GM10248 (cell line): ENCODE measurements at regions of chr19 and their contacts with region 1.

Region 1: DNA sequence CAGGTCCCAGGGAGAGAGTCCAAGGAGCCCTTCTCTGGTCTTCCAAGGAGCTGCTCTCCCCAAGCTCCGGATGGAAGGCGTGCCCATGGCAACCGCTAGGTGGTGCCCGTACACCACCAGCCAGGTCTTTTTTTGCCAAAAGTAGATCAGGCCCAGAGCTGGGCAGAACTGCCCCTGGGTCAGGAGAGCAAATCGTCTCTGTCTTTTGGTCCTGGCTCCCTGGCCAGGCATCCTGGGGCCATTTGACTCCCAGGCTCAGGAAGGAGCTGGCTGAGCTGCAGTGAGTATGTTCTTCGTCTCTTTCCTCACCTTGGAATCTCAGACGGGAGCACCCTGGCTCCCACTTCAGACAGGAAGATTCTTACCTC is 24.6 kb upstream of the BCL3 start:
- DNase-seq: peak; percentile 85
- CTCF ChIP-seq: peak; percentile 96

Region 2: GRCh38 chr19:44653977-44654774 is 69.8 kb before region 1 on chr19:
- CTCF ChIA-PET with region 1: interaction called, 27 read pairs
- POLR2A ChIA-PET with region 1: no interaction called
- DNase-seq: peak; percentile 87
- CTCF ChIP-seq: peak; percentile 92

Region 3: GRCh38 chr19:44689056-44689895 is 34.7 kb before region 1 on chr19:
- CTCF ChIA-PET with region 1: interaction called, 126 read pairs
- POLR2A ChIA-PET with region 1: no interaction called
- DNase-seq: peak; percentile 73
- CTCF ChIP-seq: peak; percentile 90

Region 4: DNA sequence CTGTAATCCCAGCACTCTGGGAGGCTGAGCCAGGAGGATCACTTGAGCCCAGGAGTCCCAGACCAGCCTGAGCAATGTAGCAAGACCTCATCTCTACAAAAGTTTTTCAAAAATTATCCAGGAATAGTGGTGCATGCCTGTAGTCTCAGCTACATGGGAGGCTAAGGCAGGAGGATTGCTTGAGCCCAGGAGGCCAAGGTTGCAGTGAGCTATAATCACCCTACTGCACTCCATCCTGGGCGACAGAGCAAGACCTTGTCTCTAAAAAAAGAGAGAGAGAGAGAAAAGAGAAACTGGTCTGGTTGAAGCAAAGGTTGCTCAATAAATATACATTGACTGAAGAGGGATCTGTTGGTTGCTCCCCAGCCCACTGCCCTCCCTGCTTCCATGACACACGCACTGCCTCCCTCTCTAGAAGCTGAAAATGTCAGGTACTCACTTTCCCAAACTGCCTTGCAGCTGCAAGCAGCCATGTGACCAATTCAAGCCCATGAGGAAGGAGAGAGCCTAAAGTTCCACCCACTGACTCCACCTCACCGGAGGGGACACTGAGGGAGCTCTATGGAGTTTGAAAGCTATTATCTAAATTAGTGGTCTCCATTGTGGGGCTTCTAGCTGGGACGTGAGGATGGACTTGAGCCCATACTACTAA is 10.9 kb before region 1 on chr19:
- CTCF ChIA-PET with region 1: interaction called, 49 read pairs
- POLR2A ChIA-PET with region 1: no interaction called
- DNase-seq: no peak
- CTCF ChIP-seq: no peak

Region 5: GRCh38 chr19:44752816-44753618 is 29.1 kb after region 1 on chr19:
- CTCF ChIA-PET with region 1: interaction called, 57 read pairs
- POLR2A ChIA-PET with region 1: interaction called, 4 read pairs
- DNase-seq: peak; percentile 94
- CTCF ChIP-seq: no peak

Region 6: GRCh38 chr19:44782729-44783128 is 58.8 kb after region 1 on chr19:
- CTCF ChIA-PET with region 1: interaction called, 513 read pairs
- POLR2A ChIA-PET with region 1: no interaction called
- DNase-seq: no peak
- CTCF ChIP-seq: no peak

Region 7: DNA sequence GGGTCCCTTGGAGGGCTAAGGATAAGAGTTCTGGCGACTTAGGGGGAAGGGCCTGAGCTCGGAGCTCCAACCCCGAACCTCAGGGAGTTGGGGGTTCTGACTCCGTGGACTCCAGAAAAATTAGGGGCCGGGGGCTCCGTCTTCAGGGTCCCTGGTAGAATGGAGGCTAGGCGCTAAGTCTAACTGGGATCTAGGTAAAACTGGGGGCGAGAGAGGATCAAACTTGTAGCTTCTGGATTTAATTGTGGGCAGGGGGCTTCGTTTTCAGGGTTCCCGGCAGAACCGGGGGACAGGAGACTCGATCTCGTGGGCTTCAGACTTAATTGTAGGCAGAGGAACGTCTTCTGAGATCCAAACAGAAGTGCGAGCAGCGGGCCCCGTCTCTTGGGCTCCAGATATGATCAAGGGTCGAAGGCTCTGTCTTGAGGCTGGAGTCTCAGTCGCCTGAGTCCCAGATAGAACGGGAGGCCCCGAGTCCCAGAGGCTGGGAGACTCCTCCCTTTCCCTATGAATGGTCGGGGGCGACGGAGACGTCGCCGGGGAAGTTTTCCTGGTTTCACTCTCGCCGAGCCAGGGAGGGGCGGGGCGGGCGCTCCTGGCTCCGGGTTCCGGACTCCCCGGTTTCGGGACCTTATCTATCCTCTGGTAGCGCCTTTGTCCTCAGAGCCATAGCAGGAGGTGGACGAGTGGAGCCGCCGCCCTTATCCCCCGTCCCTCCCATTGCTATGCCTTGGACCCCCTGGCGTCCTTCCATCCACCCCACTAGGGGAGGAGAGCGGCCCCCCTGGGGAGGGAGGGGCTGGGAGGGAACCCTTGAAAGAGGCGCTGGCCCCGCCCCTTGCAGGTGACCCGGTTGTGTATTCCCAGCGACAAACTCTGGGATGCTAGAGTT is 123.5 kb after region 1 on chr19:
- CTCF ChIA-PET with region 1: interaction called, 10 read pairs
- POLR2A ChIA-PET with region 1: no interaction called
- DNase-seq: peak; percentile 14
- CTCF ChIP-seq: no peak